ENCODE measurements at regions of chr5 and their contacts with region 1.

Region 1: GRCh38 chr5:95554647-95555548 is at the starts of genes ARSK and SKIC3:
- DNase-seq: peak; percentile 99
- ATAC-seq: peak; percentile 93
- H3K4me3 ChIP-seq: peak within 1 kb of the TSS; percentile 52
- H3K27ac ChIP-seq: peak within 1 kb of the TSS; percentile 75
- H3K4me1 ChIP-seq: peaks cover 6% of the 10 kb centered on the region
- H3K27me3 ChIP-seq: no peaks in the 10 kb centered on the region
- CTCF ChIP-seq: peak; percentile 40
- POLR2A ChIP-seq: peak; percentile 67
- RAD21 ChIP-seq: peak; percentile 44
- total RNA-seq, gene ARSK: 22.0 and 25.0 TPM in 2 replicates
- total RNA-seq, gene SKIC3: 145 and 184 TPM in 2 replicates

Region 2: GRCh38 chr5:95261437-95262175 is 293.3 kb before region 1 on chr5:
- CTCF ChIA-PET with region 1: no interaction called
- POLR2A ChIA-PET with region 1: no interaction called
- dilution Hi-C with region 1: no loop called
- in situ Hi-C with region 1: no loop called
- intact Hi-C with region 1: no loop called
- DNase-seq: peak; percentile 49
- ATAC-seq: peak; percentile 71
- H3K4me3 ChIP-seq: no peak overlapping the region
- H3K27ac ChIP-seq: no peak overlapping the region
- H3K4me1 ChIP-seq: no peaks in the 10 kb centered on the region
- H3K27me3 ChIP-seq: no peaks in the 10 kb centered on the region
- CTCF ChIP-seq: peak; percentile 64
- POLR2A ChIP-seq: no peak
- RAD21 ChIP-seq: peak; percentile 50

Region 3: GRCh38 chr5:95565280-95565920 is 10.5 kb after region 1 on chr5:
- CTCF ChIA-PET with region 1: no interaction called
- POLR2A ChIA-PET with region 1: no interaction called
- dilution Hi-C with region 1: no loop called
- in situ Hi-C with region 1: no loop called
- intact Hi-C with region 1: no loop called
- DNase-seq: peak; percentile 52
- ATAC-seq: peak; percentile 94
- H3K4me3 ChIP-seq: no peak overlapping the region
- H3K27ac ChIP-seq: peak overlapping the region; percentile 71; the same call in 1 of the 2 replicates
- H3K4me1 ChIP-seq: peaks cover 6% of the 10 kb centered on the region; the same call in 1 of the 2 replicates
- H3K27me3 ChIP-seq: no peaks in the 10 kb centered on the region
- CTCF ChIP-seq: no peak
- POLR2A ChIP-seq: no peak
- RAD21 ChIP-seq: no peak

Region 4: GRCh38 chr5:95619514-95620029 is 64.7 kb after region 1 on chr5:
- CTCF ChIA-PET with region 1: no interaction called
- POLR2A ChIA-PET with region 1: no interaction called
- dilution Hi-C with region 1: no loop called
- in situ Hi-C with region 1: no loop called
- intact Hi-C with region 1: loop called (anchors 1 kb)
- DNase-seq: no peak
- ATAC-seq: no peak
- H3K4me3 ChIP-seq: peak overlapping the region; percentile 43
- H3K27ac ChIP-seq: no peak overlapping the region; the same call in 1 of the 2 replicates
- H3K4me1 ChIP-seq: peaks cover 11% of the 10 kb centered on the region
- H3K27me3 ChIP-seq: no peaks in the 10 kb centered on the region
- CTCF ChIP-seq: no peak
- POLR2A ChIP-seq: no peak
- RAD21 ChIP-seq: no peak